T-cell (primary cell): ENCODE measurements at regions of chr2 and their contacts with region 1.

Region 1: GRCh38 chr2:160269803-160270570 is 69.9 kb upstream of the ITGB6 start:
- DNase-seq: peak; percentile 28 to 79 (median 62)
- ATAC-seq: peak; percentile 80 to 89 (median 84)
- H3K4me3 ChIP-seq: peak overlapping the region; percentile 60 to 88
- H3K4me3 Mint-ChIP-seq: peak overlapping the region; percentile 79 to 87 (median 81)
- H3K27ac ChIP-seq: peak overlapping the region; percentile 75
- H3K27ac Mint-ChIP-seq: peak overlapping the region; percentile 83 to 91
- H3K4me1 ChIP-seq: peaks cover 5 to 26% of the 10 kb centered on the region in 2 experiments
- H3K4me1 Mint-ChIP-seq: peaks cover 37 to 38% (median 38%) of the 10 kb centered on the region in 3 donors
- H3K27me3 ChIP-seq: no peaks in the 10 kb centered on the region
- H3K27me3 Mint-ChIP-seq: no peaks in the 10 kb centered on the region

Region 2: DNA sequence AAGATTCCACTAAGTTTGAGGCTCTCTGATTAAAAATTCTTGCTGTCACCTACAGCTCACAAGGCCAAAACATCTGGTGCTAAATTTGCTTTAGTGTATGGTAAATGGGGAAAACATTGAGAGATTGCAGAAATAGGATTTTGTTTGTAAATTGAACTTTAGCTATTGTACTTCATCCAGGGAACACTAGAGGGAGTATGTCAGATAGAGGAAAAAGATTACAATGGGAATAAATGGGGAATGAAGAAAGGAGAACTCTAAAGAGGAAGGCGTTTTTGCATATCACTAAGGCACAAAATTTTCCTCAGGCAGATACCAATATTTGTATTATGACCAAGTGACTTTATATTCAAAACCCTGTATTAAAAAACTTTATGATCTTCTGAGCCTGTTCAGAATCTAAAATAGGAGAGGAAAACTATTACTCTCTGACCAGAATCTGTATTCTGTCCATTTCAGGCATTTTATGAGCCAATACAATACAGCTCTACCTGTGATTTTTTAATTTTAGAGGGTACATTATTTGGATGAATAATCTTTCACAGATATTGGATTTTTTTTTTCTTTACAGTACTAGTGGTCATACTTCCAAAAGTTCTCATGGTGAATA is 17.6 kb before region 1 on chr2:
- CTCF ChIA-PET with region 1: interaction called, 3 to 12 read pairs
- POLR2A ChIA-PET with region 1: no interaction called
- DNase-seq: peak in 1 of 35 experiments; percentile 52
- ATAC-seq: no peak
- H3K4me3 ChIP-seq: no peak overlapping the region
- H3K4me3 Mint-ChIP-seq: no peak overlapping the region
- H3K27ac ChIP-seq: no peak overlapping the region
- H3K27ac Mint-ChIP-seq: no peak overlapping the region
- H3K4me1 ChIP-seq: no peaks in the 10 kb centered on the region
- H3K4me1 Mint-ChIP-seq: no peaks in the 10 kb centered on the region
- H3K27me3 ChIP-seq: no peaks in the 10 kb centered on the region
- H3K27me3 Mint-ChIP-seq: no peaks in the 10 kb centered on the region